ENCODE measurements at regions of chr2 and their contacts with region 1.

Region 1: DNA sequence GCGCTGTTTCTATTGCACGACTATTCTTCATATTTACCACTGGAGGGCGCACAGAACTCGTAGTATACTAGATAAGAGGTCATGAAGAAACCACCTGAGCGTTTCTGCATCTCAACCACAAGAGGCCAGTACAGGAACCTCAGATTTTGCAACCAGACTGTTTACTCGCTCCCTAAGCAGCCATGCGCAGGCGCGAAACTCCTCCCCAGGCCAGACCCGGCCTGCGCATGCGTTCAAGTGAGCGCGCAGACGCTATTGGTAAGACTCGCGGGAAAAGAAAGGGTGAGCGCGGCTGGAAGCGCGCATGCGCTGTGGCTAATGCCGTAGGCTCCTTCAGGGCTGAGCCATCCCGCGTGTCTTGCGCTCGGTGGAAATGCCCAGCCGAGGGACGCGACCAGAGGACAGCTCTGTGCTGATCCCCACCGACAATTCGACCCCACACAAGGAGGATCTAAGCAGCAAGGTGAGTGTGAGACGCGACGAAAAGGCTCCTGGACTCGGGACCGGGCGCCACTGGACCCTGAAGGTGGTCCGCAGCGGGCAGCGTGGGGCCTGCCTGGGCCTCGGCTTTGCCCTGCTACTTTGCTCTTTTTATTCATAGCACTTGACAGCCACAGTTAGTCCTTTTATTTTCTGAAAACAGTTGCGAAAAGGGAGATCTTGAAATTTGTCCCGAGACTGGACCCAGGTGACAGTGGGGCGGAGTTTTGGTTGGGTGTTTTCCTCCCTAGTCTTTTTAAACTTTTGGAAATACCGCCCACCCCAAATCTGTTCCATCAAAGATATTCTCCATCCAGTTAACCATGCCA is at the start of gene ASNSD1:
- DNase-seq: peak; percentile 98
- H3K4me3 Mint-ChIP-seq: no peak within 1 kb of the TSS
- H3K27ac Mint-ChIP-seq: no peak within 1 kb of the TSS
- H3K4me1 Mint-ChIP-seq: peaks cover 8% of the 10 kb centered on the region
- H3K27me3 Mint-ChIP-seq: no peaks in the 10 kb centered on the region
- CTCF ChIP-seq: peak; percentile 92
- total RNA-seq, gene ASNSD1: 29.1 and 30.7 TPM in 2 replicates

Region 2: GRCh38 chr2:189698020-189698887 is 36.9 kb after region 1 on chr2:
- CTCF ChIA-PET with region 1: interaction called, 5 read pairs
- intact Hi-C with region 1: loop called (anchors 1 kb)
- DNase-seq: no peak
- H3K4me3 Mint-ChIP-seq: no peak overlapping the region
- H3K27ac Mint-ChIP-seq: no peak overlapping the region
- H3K4me1 Mint-ChIP-seq: no peaks in the 10 kb centered on the region
- H3K27me3 Mint-ChIP-seq: no peaks in the 10 kb centered on the region
- CTCF ChIP-seq: peak; percentile 8

Region 3: GRCh38 chr2:189762551-189763298 is 101.4 kb after region 1 on chr2 and contains the start of gene OSGEPL1:
- CTCF ChIA-PET with region 1: interaction called, 4 read pairs
- intact Hi-C with region 1: loop called (anchors 5 kb)
- DNase-seq: peak; percentile 92
- H3K4me3 Mint-ChIP-seq: peak within 1 kb of the TSS; percentile 89
- H3K27ac Mint-ChIP-seq: peak within 1 kb of the TSS; percentile 96
- H3K4me1 Mint-ChIP-seq: no peaks in the 10 kb centered on the region
- H3K27me3 Mint-ChIP-seq: no peaks in the 10 kb centered on the region
- CTCF ChIP-seq: peak; percentile 59
- total RNA-seq, gene OSGEPL1: 7.5 and 8.6 TPM in 2 replicates

Region 4: GRCh38 chr2:189783927-189784867 is 122.8 kb after region 1 on chr2 and contains the starts of genes ORMDL1 and PMS1:
- CTCF ChIA-PET with region 1: no interaction called
- intact Hi-C with region 1: loop called (anchors 5 kb)
- DNase-seq: peak; percentile 96
- H3K4me3 Mint-ChIP-seq: peak within 1 kb of the TSS; percentile 74
- H3K27ac Mint-ChIP-seq: peak within 1 kb of the TSS; percentile 82
- H3K4me1 Mint-ChIP-seq: peaks cover 17% of the 10 kb centered on the region
- H3K27me3 Mint-ChIP-seq: no peaks in the 10 kb centered on the region
- CTCF ChIP-seq: no peak
- total RNA-seq, gene ORMDL1: 58.4 TPM in 2 replicates
- total RNA-seq, gene PMS1: 30.1 and 43.8 TPM in 2 replicates

Region 5: GRCh38 chr2:190069936-190070696 is 408.8 kb after region 1 on chr2:
- CTCF ChIA-PET with region 1: no interaction called
- intact Hi-C with region 1: loop called (anchors 5 kb)
- DNase-seq: peak; percentile 45
- H3K4me3 Mint-ChIP-seq: no peak overlapping the region
- H3K27ac Mint-ChIP-seq: no peak overlapping the region
- H3K4me1 Mint-ChIP-seq: no peaks in the 10 kb centered on the region
- H3K27me3 Mint-ChIP-seq: no peaks in the 10 kb centered on the region
- CTCF ChIP-seq: peak; percentile 45

Region 6: DNA sequence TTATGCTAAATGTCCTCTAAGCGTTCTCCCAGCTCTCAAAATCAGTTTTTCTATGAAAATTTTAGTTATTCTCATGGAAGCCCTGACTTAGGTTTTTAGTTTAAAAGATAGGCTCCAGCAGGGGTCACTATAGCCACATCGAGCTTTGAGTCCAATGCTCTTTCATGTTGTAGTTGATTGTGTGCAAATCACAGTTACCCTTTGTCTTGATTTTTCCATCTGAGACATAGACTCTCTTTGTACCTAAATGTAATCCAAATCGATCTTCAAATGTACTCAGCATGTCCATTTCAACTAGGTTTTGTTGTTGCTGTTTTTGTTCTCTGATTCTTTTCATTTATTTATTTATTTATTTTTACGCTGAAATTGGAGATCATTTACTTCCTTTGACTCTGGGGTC is 427.6 kb after region 1 on chr2:
- CTCF ChIA-PET with region 1: no interaction called
- intact Hi-C with region 1: no loop called
- DNase-seq: peak; percentile 59
- H3K4me3 Mint-ChIP-seq: no peak overlapping the region
- H3K27ac Mint-ChIP-seq: no peak overlapping the region
- H3K4me1 Mint-ChIP-seq: peaks cover 9% of the 10 kb centered on the region
- H3K27me3 Mint-ChIP-seq: no peaks in the 10 kb centered on the region
- CTCF ChIP-seq: peak; percentile 82